ENCODE measurements at regions of chr5 and their contacts with region 1.

Region 1: GRCh38 chr5:14946815-14947640 is 75.5 kb upstream of the ANKH start:
- DNase-seq: peak; percentile 42
- H3K4me3 Mint-ChIP-seq: no peak overlapping the region
- H3K27ac Mint-ChIP-seq: peak overlapping the region; percentile 26
- H3K4me1 Mint-ChIP-seq: peaks cover 15% of the 10 kb centered on the region
- H3K27me3 Mint-ChIP-seq: peaks cover 7% of the 10 kb centered on the region

Region 2: GRCh38 chr5:14996997-14997396 is 50.0 kb after region 1 on chr5:
- CTCF ChIA-PET with region 1: interaction called, 3 read pairs
- POLR2A ChIA-PET with region 1: no interaction called
- intact Hi-C with region 1: loop called (anchors 2 kb)
- DNase-seq: no peak
- H3K4me3 Mint-ChIP-seq: no peak overlapping the region
- H3K27ac Mint-ChIP-seq: no peak overlapping the region
- H3K4me1 Mint-ChIP-seq: peaks cover 21% of the 10 kb centered on the region
- H3K27me3 Mint-ChIP-seq: no peaks in the 10 kb centered on the region

Region 3: GRCh38 chr5:15105796-15106393 is 158.9 kb after region 1 on chr5:
- CTCF ChIA-PET with region 1: no interaction called
- POLR2A ChIA-PET with region 1: no interaction called
- intact Hi-C with region 1: no loop called
- DNase-seq: peak; percentile 40
- H3K4me3 Mint-ChIP-seq: no peak overlapping the region
- H3K27ac Mint-ChIP-seq: no peak overlapping the region
- H3K4me1 Mint-ChIP-seq: peaks cover 4% of the 10 kb centered on the region
- H3K27me3 Mint-ChIP-seq: no peaks in the 10 kb centered on the region

Measured in activated CD4-positive, alpha-beta memory T cell treated with anti-CD3 and anti-CD28 coated beads for 36 hours (primary cell).